Heart left ventricle (tissue), 16 donors: ENCODE measurements at regions of chr11 and their contacts with region 1.

Region 1: GRCh38 chr11:61899146-61899841 is 7.9 kb upstream of the FADS3 start:
- DNase-seq: peak; percentile 72 to 93 (median 83)
- ATAC-seq: peak; percentile 70 to 85 (median 81)
- H3K4me3 ChIP-seq: no peak overlapping the region
- H3K27ac ChIP-seq: peak overlapping the region in 5 of 12 donors; percentile 2 to 36 (median 11)
- H3K4me1 ChIP-seq: peaks cover 0 to 22% (median 3%) of the 10 kb centered on the region in 12 donors
- H3K27me3 ChIP-seq: no peaks in the 10 kb centered on the region
- CTCF ChIP-seq: peak; percentile 99 to 100 (median 100)
- POLR2A ChIP-seq: no peak

Region 2: DNA sequence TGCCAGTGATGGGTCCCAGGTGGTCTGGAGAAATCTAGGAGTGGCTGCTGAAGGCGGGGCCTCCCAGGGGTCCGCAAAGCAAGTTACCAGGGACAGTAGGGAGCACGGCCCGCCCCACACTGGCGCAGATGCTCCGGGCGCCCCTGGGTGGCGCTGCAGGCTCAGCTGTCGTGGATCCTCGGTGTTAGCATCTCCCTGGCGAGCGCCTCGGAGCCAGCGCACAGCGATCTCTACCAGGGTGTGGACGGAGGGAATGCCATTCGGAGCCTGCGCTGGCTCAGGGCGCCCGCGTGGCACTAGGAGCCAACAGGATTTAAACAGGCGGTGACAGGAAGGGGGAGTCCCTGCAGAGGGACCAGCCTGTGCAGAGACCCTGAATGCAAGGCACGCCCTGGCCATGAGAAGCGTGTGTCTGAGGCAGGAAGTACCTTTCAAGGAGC is 28.1 kb before region 1 on chr11:
- intact Hi-C with region 1: loop called in 1 of 10 experiments (anchors 2 kb)
- DNase-seq: peak; percentile 80 to 92 (median 88)
- ATAC-seq: peak; percentile 79 to 90 (median 84)
- H3K4me3 ChIP-seq: peak overlapping the region in 7 of 12 donors; percentile 11 to 41 (median 20)
- H3K27ac ChIP-seq: peak overlapping the region in 9 of 12 donors; percentile 1 to 82 (median 56)
- H3K4me1 ChIP-seq: peaks cover 2 to 48% (median 20%) of the 10 kb centered on the region in 12 donors
- H3K27me3 ChIP-seq: no peaks in the 10 kb centered on the region
- CTCF ChIP-seq: peak; percentile 88 to 98 (median 94)
- POLR2A ChIP-seq: peak in 1 of 2 donors; percentile 13

Region 3: DNA sequence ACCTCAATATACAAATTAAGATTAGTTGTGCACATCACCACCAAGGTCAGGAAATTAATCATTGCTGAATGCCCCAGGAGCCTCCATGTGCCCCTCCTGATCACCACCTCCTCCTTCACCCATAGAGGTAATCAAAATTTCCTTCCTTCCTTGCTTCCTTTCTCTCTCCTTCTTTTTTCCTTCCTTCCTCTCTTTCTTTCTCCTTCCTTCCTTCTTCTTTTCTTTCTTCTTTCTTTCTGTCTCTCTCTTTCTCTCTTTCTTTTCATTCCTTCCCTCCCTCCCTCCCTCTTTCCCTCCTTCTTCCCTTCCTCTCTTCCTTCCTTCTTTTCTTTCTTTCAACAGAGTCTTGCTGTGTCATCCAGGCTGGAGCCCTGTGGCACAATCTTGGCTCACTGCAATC is 136.0 kb after region 1 on chr11:
- intact Hi-C with region 1: no loop called
- DNase-seq: no peak
- ATAC-seq: no peak
- H3K4me3 ChIP-seq: no peak overlapping the region
- H3K27ac ChIP-seq: no peak overlapping the region
- H3K4me1 ChIP-seq: peaks cover 0 to 7% (median 0%) of the 10 kb centered on the region in 12 donors
- H3K27me3 ChIP-seq: no peaks in the 10 kb centered on the region
- CTCF ChIP-seq: no peak
- POLR2A ChIP-seq: no peak

Region 4: GRCh38 chr11:62081378-62082291 is 182.3 kb after region 1 on chr11:
- intact Hi-C with region 1: loop called (anchors 1 to 5 kb)
- DNase-seq: peak; percentile 72 to 88 (median 81)
- ATAC-seq: peak; percentile 61 to 89 (median 83)
- H3K4me3 ChIP-seq: peak overlapping the region in 1 of 12 donors; percentile 18
- H3K27ac ChIP-seq: no peak overlapping the region
- H3K4me1 ChIP-seq: peaks cover 0 to 11% (median 0%) of the 10 kb centered on the region in 12 donors
- H3K27me3 ChIP-seq: no peaks in the 10 kb centered on the region
- CTCF ChIP-seq: peak; percentile 82 to 97 (median 93)
- POLR2A ChIP-seq: no peak

Region 5: GRCh38 chr11:62108017-62108750 is 208.9 kb after region 1 on chr11:
- intact Hi-C with region 1: loop called in 8 of 10 experiments (anchors 2 to 5 kb)
- DNase-seq: peak in 2 of 5 donors; percentile 39 to 59
- ATAC-seq: peak in 2 of 4 donors; percentile 50 to 51
- H3K4me3 ChIP-seq: no peak overlapping the region
- H3K27ac ChIP-seq: peak overlapping the region in 5 of 12 donors; percentile 14 to 70 (median 27)
- H3K4me1 ChIP-seq: peaks cover 4 to 51% (median 20%) of the 10 kb centered on the region in 12 donors
- H3K27me3 ChIP-seq: no peaks in the 10 kb centered on the region
- CTCF ChIP-seq: peak; percentile 78 to 91 (median 82)
- POLR2A ChIP-seq: no peak